ENCODE measurements at regions of chr1 and their contacts with region 1.

Region 1: DNA sequence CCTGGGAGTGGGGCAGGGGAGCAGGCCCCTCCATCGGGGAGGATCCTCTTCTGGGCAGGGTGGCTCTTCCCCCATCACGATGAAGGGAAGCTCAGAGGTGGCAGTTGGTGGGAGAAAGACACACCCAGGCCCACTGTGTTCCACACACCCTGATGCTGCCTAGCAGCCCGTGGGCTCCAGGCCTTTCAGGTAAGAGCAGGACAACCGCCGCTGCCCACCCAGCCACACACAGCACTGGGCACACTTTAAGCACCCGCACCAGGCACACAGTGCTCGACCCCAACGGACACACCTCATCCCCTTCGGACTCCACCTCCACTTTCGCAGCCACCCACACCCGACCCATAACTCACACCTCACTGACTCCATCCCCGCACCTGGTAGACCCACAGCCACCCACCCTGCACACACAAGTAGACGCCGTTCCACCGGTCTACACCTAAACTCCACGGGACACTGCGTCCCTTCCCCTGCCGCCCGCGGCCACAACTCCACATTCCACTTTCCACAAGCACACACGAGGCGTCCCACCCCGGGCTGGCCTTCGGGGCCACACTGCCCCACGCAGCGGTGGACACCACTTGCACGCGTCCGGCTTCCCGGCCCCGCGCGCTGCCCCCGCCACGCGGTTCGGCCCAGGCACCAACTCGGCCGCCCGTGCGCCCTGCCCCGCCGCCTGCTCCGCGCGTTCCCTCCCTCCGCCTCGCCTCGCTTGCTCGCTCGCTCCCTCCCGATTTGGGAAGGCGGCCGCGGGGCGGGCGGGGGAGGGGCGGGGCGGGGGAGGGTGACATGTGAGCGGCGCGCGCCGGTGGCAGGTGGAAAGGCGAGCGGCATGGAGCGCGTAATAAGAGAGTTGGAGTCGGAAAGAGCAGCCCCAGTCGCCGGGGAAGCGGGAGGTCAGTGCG is at the start of gene KCNQ4:
- DNase-seq: peak in 1 of 2 donors; percentile 84
- H3K4me3 ChIP-seq: peak within 1 kb of the TSS; percentile 65 to 69
- H3K27ac ChIP-seq: peak within 1 kb of the TSS; percentile 82 to 91
- H3K4me1 ChIP-seq: peaks cover 6 to 22% of the 10 kb centered on the region in 2 donors
- H3K27me3 ChIP-seq: no peaks in the 10 kb centered on the region
- CTCF ChIP-seq: no peak
- total RNA-seq, gene KCNQ4: 14.5 TPM

Region 2: GRCh38 chr1:40709100-40709801 is 74.0 kb before region 1 on chr1:
- intact Hi-C with region 1: loop called (anchors 5 kb)
- DNase-seq: peak; percentile 49 to 92
- H3K4me3 ChIP-seq: peak overlapping the region; percentile 51 to 64
- H3K27ac ChIP-seq: peak overlapping the region; percentile 59 to 73
- H3K4me1 ChIP-seq: peaks cover 4 to 48% of the 10 kb centered on the region in 2 donors
- H3K27me3 ChIP-seq: no peaks in the 10 kb centered on the region
- CTCF ChIP-seq: no peak

Measured in ascending aorta (tissue), 2 donors.